ENCODE measurements at regions of chr5 and their contacts with region 1.

Region 1: DNA sequence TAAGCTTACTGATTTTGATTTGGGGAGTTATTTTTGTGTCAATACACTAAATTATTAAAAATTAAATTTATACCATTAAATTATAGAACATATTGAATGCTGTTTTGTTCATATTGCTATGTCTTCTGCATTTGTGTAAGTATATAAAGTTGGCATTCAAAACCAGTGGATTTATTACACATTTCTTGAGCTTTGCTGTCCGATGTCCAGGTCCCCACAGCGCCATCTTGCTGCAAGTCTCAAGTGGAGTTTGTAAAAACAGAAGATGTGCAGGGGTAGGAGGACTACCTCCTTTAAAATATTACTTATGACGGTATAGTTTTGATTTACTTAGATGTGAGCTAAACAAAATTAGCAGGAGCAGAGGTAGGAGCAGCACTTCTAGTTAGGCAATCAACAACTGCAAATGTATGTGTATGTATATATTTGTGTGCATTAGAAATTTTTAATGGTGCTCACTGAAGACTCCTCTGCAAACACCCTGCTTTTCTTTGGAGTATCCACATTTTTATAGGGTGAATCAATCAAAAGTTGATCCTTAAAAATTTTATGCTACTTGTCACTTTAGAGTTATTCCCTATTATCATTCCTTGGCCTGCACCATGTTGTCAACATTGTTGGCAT is 37.4 kb downstream of the CPEB4 start:
- DNase-seq: peak; percentile 57
- ATAC-seq: 0 out of 2 replicates have a peak, but pooled peaks have one; percentile 44
- H3K4me3 ChIP-seq: no peak overlapping the region
- H3K27ac ChIP-seq: no peak overlapping the region
- H3K4me1 ChIP-seq: peaks cover 10% of the 10 kb centered on the region; the same call in 1 of the 2 replicates
- H3K27me3 ChIP-seq: no peaks in the 10 kb centered on the region
- CTCF ChIP-seq: peak; percentile 49
- POLR2A ChIP-seq: no peak
- RAD21 ChIP-seq: peak; percentile 46

Region 2: GRCh38 chr5:173941758-173942401 is 16.3 kb after region 1 on chr5:
- CTCF ChIA-PET with region 1: interaction called, 16 read pairs
- POLR2A ChIA-PET with region 1: no interaction called
- dilution Hi-C with region 1: no loop called
- in situ Hi-C with region 1: no loop called
- intact Hi-C with region 1: no loop called
- DNase-seq: no peak
- ATAC-seq: no peak
- H3K4me3 ChIP-seq: no peak overlapping the region
- H3K27ac ChIP-seq: no peak overlapping the region
- H3K4me1 ChIP-seq: peaks cover 2% of the 10 kb centered on the region; the same call in 1 of the 2 replicates
- H3K27me3 ChIP-seq: no peaks in the 10 kb centered on the region
- CTCF ChIP-seq: no peak
- POLR2A ChIP-seq: no peak
- RAD21 ChIP-seq: no peak

Region 3: GRCh38 chr5:173963867-173964441 is 38.4 kb after region 1 on chr5:
- CTCF ChIA-PET with region 1: interaction called, 3 read pairs
- POLR2A ChIA-PET with region 1: no interaction called
- dilution Hi-C with region 1: no loop called
- in situ Hi-C with region 1: no loop called
- intact Hi-C with region 1: loop called (anchors 5 kb)
- DNase-seq: no peak
- ATAC-seq: no peak
- H3K4me3 ChIP-seq: no peak overlapping the region
- H3K27ac ChIP-seq: no peak overlapping the region
- H3K4me1 ChIP-seq: peaks cover 2% of the 10 kb centered on the region
- H3K27me3 ChIP-seq: no peaks in the 10 kb centered on the region
- CTCF ChIP-seq: no peak
- POLR2A ChIP-seq: no peak
- RAD21 ChIP-seq: no peak